ENCODE measurements at regions of chr16 and their contacts with region 1.

Region 1: GRCh38 chr16:82031116-82032084 is 3.7 kb upstream of the HSD17B2 start:
- DNase-seq: peak; percentile 65
- H3K4me3 ChIP-seq: no peak overlapping the region
- H3K27ac ChIP-seq: no peak overlapping the region
- H3K4me1 ChIP-seq: peaks cover 37% of the 10 kb centered on the region
- H3K27me3 ChIP-seq: no peaks in the 10 kb centered on the region
- CTCF ChIP-seq: peak; percentile 74 to 79

Region 2: GRCh38 chr16:81623363-81624102 is 407.9 kb before region 1 on chr16:
- CTCF ChIA-PET with region 1: no interaction called
- dilution Hi-C with region 1: no loop called
- in situ Hi-C with region 1: no loop called
- intact Hi-C with region 1: no loop called
- DNase-seq: peak; percentile 60
- H3K4me3 ChIP-seq: no peak overlapping the region
- H3K27ac ChIP-seq: peak overlapping the region; percentile 51
- H3K4me1 ChIP-seq: peaks cover 55% of the 10 kb centered on the region
- H3K27me3 ChIP-seq: no peaks in the 10 kb centered on the region
- CTCF ChIP-seq: peak; percentile 59 to 65

Region 3: GRCh38 chr16:81885976-81886586 is 145.3 kb before region 1 on chr16:
- CTCF ChIA-PET with region 1: no interaction called
- dilution Hi-C with region 1: no loop called
- in situ Hi-C with region 1: no loop called
- intact Hi-C with region 1: loop called (anchors 1 kb)
- DNase-seq: no peak
- H3K4me3 ChIP-seq: no peak overlapping the region
- H3K27ac ChIP-seq: no peak overlapping the region
- H3K4me1 ChIP-seq: no peaks in the 10 kb centered on the region
- H3K27me3 ChIP-seq: no peaks in the 10 kb centered on the region
- CTCF ChIP-seq: peak; percentile 60 to 83

Region 4: DNA sequence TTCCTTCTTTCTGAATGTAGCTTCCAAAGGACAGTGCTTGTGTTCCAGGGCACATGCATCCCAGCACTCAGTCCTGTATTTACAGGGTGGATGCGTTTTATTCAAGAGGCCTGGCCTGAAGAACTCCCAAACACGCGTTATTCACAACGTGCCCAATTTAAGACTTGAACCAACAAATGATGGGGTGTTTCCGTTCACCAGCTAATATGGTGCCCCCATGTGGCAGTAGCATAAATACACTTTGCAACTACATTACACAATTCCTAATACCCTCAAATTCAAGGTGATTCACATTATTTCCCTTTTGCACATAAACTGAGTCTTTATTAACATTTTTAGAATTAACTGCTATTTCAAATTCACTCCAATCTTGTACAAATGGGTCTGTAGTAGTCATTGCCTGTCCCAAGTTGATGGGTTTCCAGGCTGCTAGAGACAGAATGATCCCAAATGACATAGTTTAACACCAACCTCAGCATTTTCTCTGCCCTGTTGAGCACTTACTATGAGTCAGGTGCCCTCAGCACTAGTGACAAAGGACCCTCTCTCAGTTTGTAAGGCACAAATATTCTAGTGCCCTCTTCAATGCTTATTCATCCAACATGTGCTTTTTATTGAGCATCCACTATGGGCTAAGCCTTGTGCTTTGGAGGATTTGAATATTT is 30.6 kb after region 1 on chr16:
- CTCF ChIA-PET with region 1: no interaction called
- dilution Hi-C with region 1: no loop called
- in situ Hi-C with region 1: no loop called
- intact Hi-C with region 1: loop called (anchors 1 kb)
- DNase-seq: peak; percentile 30
- H3K4me3 ChIP-seq: no peak overlapping the region
- H3K27ac ChIP-seq: peak overlapping the region; percentile 76
- H3K4me1 ChIP-seq: peaks cover 26% of the 10 kb centered on the region
- H3K27me3 ChIP-seq: no peaks in the 10 kb centered on the region
- CTCF ChIP-seq: peak; percentile 53 to 63

Region 5: GRCh38 chr16:82229796-82230619 is 198.6 kb after region 1 on chr16:
- CTCF ChIA-PET with region 1: interaction called, 9 read pairs
- dilution Hi-C with region 1: no loop called
- in situ Hi-C with region 1: loop called (anchors 5 to 10 kb)
- intact Hi-C with region 1: loop called (anchors 1 kb)
- DNase-seq: peak; percentile 60
- H3K4me3 ChIP-seq: no peak overlapping the region
- H3K27ac ChIP-seq: no peak overlapping the region
- H3K4me1 ChIP-seq: peaks cover 14% of the 10 kb centered on the region
- H3K27me3 ChIP-seq: no peaks in the 10 kb centered on the region
- CTCF ChIP-seq: peak; percentile 90 to 96

Region 6: GRCh38 chr16:82263521-82264143 is 232.2 kb after region 1 on chr16:
- CTCF ChIA-PET with region 1: no interaction called
- dilution Hi-C with region 1: no loop called
- in situ Hi-C with region 1: no loop called
- intact Hi-C with region 1: loop called (anchors 1 kb)
- DNase-seq: peak; percentile 20
- H3K4me3 ChIP-seq: no peak overlapping the region
- H3K27ac ChIP-seq: no peak overlapping the region
- H3K4me1 ChIP-seq: no peaks in the 10 kb centered on the region
- H3K27me3 ChIP-seq: peaks cover 4% of the 10 kb centered on the region
- CTCF ChIP-seq: peak; percentile 90 to 97

Region 7: GRCh38 chr16:82580298-82580890 is 549.0 kb after region 1 on chr16:
- CTCF ChIA-PET with region 1: no interaction called
- dilution Hi-C with region 1: no loop called
- in situ Hi-C with region 1: no loop called
- intact Hi-C with region 1: loop called (anchors 10 kb)
- DNase-seq: peak; percentile 8
- H3K4me3 ChIP-seq: no peak overlapping the region
- H3K27ac ChIP-seq: no peak overlapping the region
- H3K4me1 ChIP-seq: no peaks in the 10 kb centered on the region
- H3K27me3 ChIP-seq: no peaks in the 10 kb centered on the region
- CTCF ChIP-seq: peak; percentile 51 to 54